ENCODE measurements at regions of chr2 and their contacts with region 1.

Region 1: GRCh38 chr2:26144953-26145680 is 27.8 kb upstream of the GAREM2 start:
- DNase-seq: peak; percentile 82
- H3K4me3 ChIP-seq: no peak overlapping the region
- H3K27ac ChIP-seq: no peak overlapping the region
- H3K4me1 ChIP-seq: peaks cover 7% of the 10 kb centered on the region
- H3K27me3 ChIP-seq: no peaks in the 10 kb centered on the region
- CTCF ChIP-seq: peak; percentile 90

Region 2: GRCh38 chr2:25586726-25587144 is 558.4 kb before region 1 on chr2:
- CTCF ChIA-PET with region 1: no interaction called
- POLR2A ChIA-PET with region 1: no interaction called
- intact Hi-C with region 1: no loop called
- DNase-seq: no peak
- H3K4me3 ChIP-seq: no peak overlapping the region
- H3K27ac ChIP-seq: no peak overlapping the region
- H3K4me1 ChIP-seq: peaks cover 28% of the 10 kb centered on the region
- H3K27me3 ChIP-seq: no peaks in the 10 kb centered on the region
- CTCF ChIP-seq: no peak

Region 3: DNA sequence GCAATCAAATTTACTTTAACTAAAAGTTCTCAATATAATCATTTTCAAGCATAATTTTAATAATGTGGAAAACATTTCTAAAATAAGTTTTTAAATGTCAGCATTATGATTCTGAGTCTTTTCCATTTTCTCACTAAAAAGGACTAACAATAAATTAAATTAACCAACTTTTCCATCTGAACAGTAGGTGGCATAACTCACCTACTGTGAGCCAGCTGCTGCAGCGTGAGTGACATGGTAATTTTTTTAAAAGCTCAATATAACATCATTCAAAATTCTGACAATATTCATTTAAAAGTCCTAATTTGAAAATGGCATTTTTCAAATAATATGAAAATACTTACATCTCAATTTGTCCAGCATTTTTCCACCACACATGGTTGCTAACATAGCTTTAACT is 538.2 kb before region 1 on chr2:
- CTCF ChIA-PET with region 1: no interaction called
- POLR2A ChIA-PET with region 1: no interaction called
- intact Hi-C with region 1: loop called (anchors 10 kb)
- DNase-seq: peak; percentile 44
- H3K4me3 ChIP-seq: no peak overlapping the region
- H3K27ac ChIP-seq: no peak overlapping the region
- H3K4me1 ChIP-seq: no peaks in the 10 kb centered on the region
- H3K27me3 ChIP-seq: no peaks in the 10 kb centered on the region
- CTCF ChIP-seq: peak; percentile 66

Region 4: GRCh38 chr2:25951071-25951547 is 194.0 kb before region 1 on chr2:
- CTCF ChIA-PET with region 1: no interaction called
- POLR2A ChIA-PET with region 1: no interaction called
- intact Hi-C with region 1: loop called (anchors 1 kb)
- DNase-seq: peak; percentile 88
- H3K4me3 ChIP-seq: no peak overlapping the region
- H3K27ac ChIP-seq: no peak overlapping the region
- H3K4me1 ChIP-seq: no peaks in the 10 kb centered on the region
- H3K27me3 ChIP-seq: no peaks in the 10 kb centered on the region
- CTCF ChIP-seq: peak; percentile 97

Region 5: DNA sequence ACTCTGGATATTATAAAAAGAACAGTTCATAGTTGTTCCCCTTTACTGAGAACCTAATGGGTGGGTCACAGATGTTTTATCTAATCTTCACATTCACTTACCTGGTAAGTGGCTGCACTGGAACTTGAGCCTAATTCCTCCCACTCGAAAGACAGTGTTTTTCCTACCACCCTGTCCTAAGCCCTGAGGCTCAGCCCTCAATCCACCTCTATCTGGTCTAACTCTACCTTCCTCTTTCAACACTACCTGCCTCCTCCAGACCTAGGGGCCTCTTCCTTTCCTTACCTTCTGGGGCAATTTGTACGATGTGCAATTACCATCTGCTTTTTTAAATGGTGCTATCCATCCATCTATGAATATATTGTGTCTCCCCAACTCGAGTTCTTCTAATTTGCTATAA is 153.2 kb before region 1 on chr2:
- CTCF ChIA-PET with region 1: interaction called, 6 read pairs
- POLR2A ChIA-PET with region 1: interaction called, 3 read pairs
- intact Hi-C with region 1: loop called (anchors 1 kb)
- DNase-seq: no peak
- H3K4me3 ChIP-seq: no peak overlapping the region
- H3K27ac ChIP-seq: no peak overlapping the region
- H3K4me1 ChIP-seq: peaks cover 6% of the 10 kb centered on the region
- H3K27me3 ChIP-seq: no peaks in the 10 kb centered on the region
- CTCF ChIP-seq: no peak

Region 6: GRCh38 chr2:26088032-26088643 is 57.0 kb before region 1 on chr2:
- CTCF ChIA-PET with region 1: interaction called, 12 read pairs
- POLR2A ChIA-PET with region 1: no interaction called
- intact Hi-C with region 1: loop called (anchors 2 kb)
- DNase-seq: peak; percentile 55
- H3K4me3 ChIP-seq: no peak overlapping the region
- H3K27ac ChIP-seq: no peak overlapping the region
- H3K4me1 ChIP-seq: peaks cover 7% of the 10 kb centered on the region
- H3K27me3 ChIP-seq: no peaks in the 10 kb centered on the region
- CTCF ChIP-seq: peak; percentile 86

Measured in A673 (cell line).